ENCODE measurements at regions of chr17 and their contacts with region 1.

Region 1: DNA sequence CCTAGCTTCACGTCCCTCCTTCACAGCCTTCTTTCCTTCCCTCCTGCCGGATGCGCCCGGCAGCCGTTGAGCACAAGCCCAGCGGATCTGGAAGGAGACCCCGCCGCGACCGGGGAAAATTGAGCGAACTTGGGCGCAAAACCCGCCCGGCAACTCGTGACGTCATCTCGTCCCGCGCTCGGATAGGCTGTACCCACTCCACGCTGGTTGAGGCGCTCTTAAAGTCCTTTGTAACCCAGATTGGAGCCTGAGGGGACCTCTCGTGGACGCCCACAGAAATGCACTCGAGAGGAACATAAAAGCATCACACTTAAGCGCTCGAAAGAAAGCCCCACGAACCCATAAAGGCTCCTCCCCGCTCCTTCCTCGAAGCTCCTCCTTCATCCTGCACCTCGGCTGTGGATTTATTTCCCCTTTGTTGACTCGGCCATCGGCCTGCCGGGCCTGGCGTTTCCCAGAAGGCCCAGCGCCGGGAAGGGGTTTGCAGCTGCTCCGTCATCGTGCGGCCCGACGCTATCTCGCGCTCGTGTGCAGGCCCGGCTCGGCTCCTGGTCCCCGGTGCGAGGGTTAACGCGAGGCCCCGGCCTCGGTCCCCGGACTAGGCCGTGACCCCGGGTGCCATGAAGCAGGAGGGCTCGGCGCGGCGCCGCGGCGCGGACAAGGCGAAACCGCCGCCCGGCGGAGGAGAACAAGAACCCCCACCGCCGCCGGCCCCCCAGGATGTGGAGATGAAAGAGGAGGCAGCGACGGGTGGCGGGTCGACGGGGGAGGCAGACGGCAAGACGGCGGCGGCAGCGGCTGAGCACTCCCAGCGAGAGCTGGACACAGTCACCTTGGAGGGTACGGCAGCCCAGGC is at the start of gene PSMD3:
- DNase-seq: peak; percentile 88

Region 2: GRCh38 chr17:39952680-39953470 is 27.7 kb before region 1 on chr17:
- CTCF ChIA-PET with region 1: interaction called, 9 read pairs
- POLR2A ChIA-PET with region 1: interaction called, 30 read pairs
- DNase-seq: peak; percentile 93

Region 3: DNA sequence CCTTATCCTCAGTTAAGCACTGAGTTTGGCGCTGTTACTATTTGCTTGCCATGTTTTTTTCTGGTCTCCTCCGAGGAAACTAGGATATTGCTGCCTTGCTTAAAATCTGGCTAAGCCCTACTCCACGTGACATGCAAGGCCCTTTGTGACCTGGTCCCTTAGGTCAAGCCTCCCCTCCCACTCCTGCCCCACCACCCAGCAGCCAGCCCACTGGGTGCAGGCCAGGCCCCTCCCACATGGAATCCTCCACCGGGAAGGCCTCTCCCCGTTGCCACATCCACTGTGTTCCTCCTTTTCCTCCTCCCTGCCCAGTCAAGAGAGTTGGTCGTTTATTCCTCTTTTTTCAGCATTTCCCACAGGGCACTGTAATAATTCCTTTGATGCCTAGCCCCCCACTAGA is 16.2 kb after region 1 on chr17:
- CTCF ChIA-PET with region 1: no interaction called
- POLR2A ChIA-PET with region 1: interaction called, 10 read pairs
- DNase-seq: no peak

Measured in HEK293T (cell line).